GM13976 (cell line): ENCODE measurements at regions of chr6 and their contacts with region 1.

Region 1: GRCh38 chr6:32589598-32590449 is at the start of gene HLA-DRB1:
- DNase-seq: peak; percentile 57
- CTCF ChIP-seq: no peak

Region 2: DNA sequence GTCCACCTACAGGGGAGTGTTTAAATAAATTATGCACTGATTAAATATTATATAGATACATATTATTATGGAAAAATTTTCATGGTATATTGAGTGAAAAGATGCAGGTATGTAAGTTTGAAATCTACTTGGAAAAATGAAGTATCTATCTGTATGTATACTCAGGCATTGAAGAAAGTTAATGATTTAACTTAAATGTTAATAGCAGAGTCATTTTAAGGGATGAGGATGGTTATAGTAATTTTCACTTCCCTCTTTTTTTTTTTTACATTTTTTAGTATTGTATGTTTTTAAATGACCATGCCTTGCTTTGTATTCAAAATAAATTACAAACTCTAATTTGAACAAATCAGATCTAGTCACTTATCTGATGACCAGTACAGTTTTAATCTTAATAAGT is 322.8 kb before region 1 on chr6:
- in situ Hi-C with region 1: no loop called
- DNase-seq: no peak
- CTCF ChIP-seq: no peak

Region 3: GRCh38 chr6:32529697-32530429 is 60.0 kb before region 1 on chr6 and contains the start of gene HLA-DRB5:
- in situ Hi-C with region 1: loop called (anchors 5 kb)
- DNase-seq: peak; percentile 21
- CTCF ChIP-seq: no peak

Region 4: DNA sequence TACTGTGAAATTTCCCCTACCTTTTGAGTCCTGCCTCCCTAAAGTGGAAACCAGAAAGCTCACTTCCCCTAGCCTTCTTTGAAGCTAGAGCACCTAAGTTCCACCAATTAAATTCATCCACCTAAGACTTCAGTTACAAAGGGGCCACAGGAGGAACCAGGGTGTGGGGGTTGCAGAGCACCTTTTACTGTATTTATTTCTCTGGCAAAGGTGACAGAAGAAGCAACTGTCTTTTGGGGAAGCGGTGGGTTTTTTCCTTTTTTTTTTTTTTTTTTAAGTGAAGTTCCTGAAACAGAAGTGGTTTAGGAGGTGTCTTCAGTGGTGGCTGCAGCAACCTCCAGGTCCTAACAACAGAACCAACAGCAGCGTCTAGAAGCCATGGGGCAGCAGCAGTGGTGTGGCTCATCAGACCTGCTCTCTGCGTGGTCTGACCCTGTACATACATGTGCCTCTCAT is 277.2 kb after region 1 on chr6:
- in situ Hi-C with region 1: no loop called
- DNase-seq: no peak
- CTCF ChIP-seq: no peak